ENCODE measurements at regions of chr11 and their contacts with region 1.

Region 1: GRCh38 chr11:75577207-75577606 is 15.2 kb downstream of the SERPINH1 start:
- DNase-seq: peak; percentile 66
- H3K4me3 Mint-ChIP-seq: no peak overlapping the region
- H3K27ac Mint-ChIP-seq: no peak overlapping the region
- H3K4me1 Mint-ChIP-seq: peaks cover 4% of the 10 kb centered on the region
- H3K27me3 Mint-ChIP-seq: no peaks in the 10 kb centered on the region

Region 2: DNA sequence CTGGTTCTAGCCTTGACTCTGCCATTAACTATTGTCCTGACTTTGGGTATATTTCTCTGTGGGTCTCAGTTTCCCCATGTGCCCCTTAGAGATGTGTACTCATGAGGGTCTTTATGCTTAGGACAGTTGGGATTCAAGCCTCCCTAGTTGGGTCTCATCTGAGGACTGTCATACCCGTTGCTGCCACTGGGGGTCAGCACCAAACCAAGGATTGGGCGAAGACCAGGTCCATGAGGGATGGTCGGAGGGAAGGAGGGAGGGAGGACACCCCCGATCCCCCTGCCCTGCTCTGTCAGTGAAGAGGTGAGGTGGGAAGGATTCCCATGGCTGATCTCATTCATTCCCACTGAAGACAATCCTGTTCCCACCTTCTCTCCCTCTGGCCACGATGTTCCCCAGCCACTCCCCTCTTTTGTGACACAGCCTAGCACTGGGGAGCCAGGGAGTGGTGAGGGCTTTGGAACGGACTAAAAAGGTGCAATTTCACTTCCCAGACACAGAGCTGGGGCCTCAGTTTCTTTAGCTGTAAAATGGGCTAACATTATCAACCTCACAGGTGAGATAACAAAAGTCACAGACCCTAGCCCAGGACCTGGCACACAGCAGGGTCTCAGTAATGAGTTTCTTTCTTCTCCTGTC is 131.8 kb before region 1 on chr11:
- CTCF ChIA-PET with region 1: interaction called, 14 read pairs
- POLR2A ChIA-PET with region 1: no interaction called
- intact Hi-C with region 1: no loop called
- DNase-seq: peak; percentile 80
- H3K4me3 Mint-ChIP-seq: no peak overlapping the region
- H3K27ac Mint-ChIP-seq: no peak overlapping the region
- H3K4me1 Mint-ChIP-seq: no peaks in the 10 kb centered on the region
- H3K27me3 Mint-ChIP-seq: no peaks in the 10 kb centered on the region

Measured in activated CD4-positive, alpha-beta memory T cell treated with anti-CD3 and anti-CD28 coated beads for 36 hours (primary cell).